Activated CD4-positive, alpha-beta T cell treated with anti-CD3 and anti-CD28 coated beads for 36 hours (primary cell): ENCODE measurements at regions of chr2 and their contacts with region 1.

Region 1: GRCh38 chr2:74119912-74120825 is 27.5 kb downstream of the BOLA3 start:
- DNase-seq: peak; percentile 92
- ATAC-seq: peak; percentile 97
- H3K4me3 Mint-ChIP-seq: peak overlapping the region; percentile 81
- H3K27ac Mint-ChIP-seq: peak overlapping the region; percentile 89
- H3K4me1 Mint-ChIP-seq: peaks cover 7% of the 10 kb centered on the region
- H3K27me3 Mint-ChIP-seq: peaks cover 3% of the 10 kb centered on the region

Region 2: GRCh38 chr2:73779467-73780236 is 340.5 kb before region 1 on chr2 and contains the start of gene DUSP11:
- CTCF ChIA-PET with region 1: interaction called, 3 read pairs
- POLR2A ChIA-PET with region 1: no interaction called
- intact Hi-C with region 1: loop called in 1 of 2 experiments (anchors 1 kb)
- DNase-seq: peak; percentile 98
- ATAC-seq: peak; percentile 100
- H3K4me3 Mint-ChIP-seq: peak within 1 kb of the TSS; percentile 100
- H3K27ac Mint-ChIP-seq: peak within 1 kb of the TSS; percentile 98
- H3K4me1 Mint-ChIP-seq: peaks cover 27% of the 10 kb centered on the region
- H3K27me3 Mint-ChIP-seq: peaks cover 2% of the 10 kb centered on the region
- total RNA-seq, gene DUSP11: 27.6 to 33.5 TPM

Region 3: GRCh38 chr2:74002487-74003391 is 117.4 kb before region 1 on chr2:
- CTCF ChIA-PET with region 1: no interaction called
- POLR2A ChIA-PET with region 1: no interaction called
- intact Hi-C with region 1: loop called in 1 of 2 experiments (anchors 2 kb)
- DNase-seq: peak; percentile 89
- ATAC-seq: peak; percentile 81
- H3K4me3 Mint-ChIP-seq: peak overlapping the region; percentile 77
- H3K27ac Mint-ChIP-seq: peak overlapping the region; percentile 71
- H3K4me1 Mint-ChIP-seq: peaks cover 81% of the 10 kb centered on the region
- H3K27me3 Mint-ChIP-seq: no peaks in the 10 kb centered on the region

Region 4: DNA sequence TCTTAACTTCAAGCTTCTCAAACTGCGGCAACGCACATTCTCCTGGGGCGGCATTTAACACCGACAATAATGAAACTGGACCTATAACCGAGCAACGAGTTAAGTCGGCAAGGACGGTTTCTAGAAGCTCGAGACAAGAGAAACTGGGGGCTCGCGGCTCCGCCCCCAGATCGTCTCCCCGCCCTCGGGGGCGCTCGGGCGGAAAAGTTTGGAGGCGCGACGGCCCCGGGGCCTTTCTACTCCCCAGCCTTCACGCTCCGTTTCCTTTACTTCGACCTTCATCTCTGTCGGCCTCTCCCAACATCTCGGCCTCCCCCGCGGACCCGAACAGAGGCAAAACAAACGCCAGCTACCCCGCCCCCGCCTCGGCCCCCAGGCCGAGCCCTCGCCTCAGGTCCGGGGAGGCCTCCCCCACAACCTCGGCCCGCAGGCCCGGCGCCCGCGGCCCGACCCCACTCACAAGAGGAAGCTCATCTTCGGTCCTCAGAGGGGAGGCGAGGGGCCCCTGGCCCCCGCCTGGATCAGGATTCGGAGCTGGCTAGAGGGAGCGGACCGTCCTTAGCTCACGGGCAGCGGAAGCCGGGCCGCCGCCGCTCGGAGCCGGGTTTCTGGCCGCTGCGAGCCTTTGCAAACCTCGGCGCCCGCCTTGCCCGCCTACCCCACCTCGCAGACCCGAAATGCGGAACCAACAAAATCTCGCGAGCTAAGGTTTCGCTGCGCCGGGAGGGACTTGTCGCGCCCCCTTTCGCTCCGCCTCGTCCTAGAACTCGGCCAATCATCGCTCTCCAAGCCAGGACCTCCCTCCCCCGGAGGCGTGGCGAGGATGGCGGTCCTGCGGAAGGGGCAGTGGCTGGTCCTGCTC is 58.3 kb after region 1 on chr2 and contains the start of gene MOB1A:
- CTCF ChIA-PET with region 1: interaction called, 17 read pairs
- POLR2A ChIA-PET with region 1: interaction called, 4 read pairs
- intact Hi-C with region 1: loop called in 1 of 2 experiments (anchors 1 kb)
- DNase-seq: peak; percentile 99
- ATAC-seq: peak; percentile 95
- H3K4me3 Mint-ChIP-seq: peak within 1 kb of the TSS; percentile 82
- H3K27ac Mint-ChIP-seq: peak within 1 kb of the TSS; percentile 87
- H3K4me1 Mint-ChIP-seq: peaks cover 42% of the 10 kb centered on the region
- H3K27me3 Mint-ChIP-seq: no peaks in the 10 kb centered on the region
- total RNA-seq, gene MOB1A: 96.6 to 149 TPM

Region 5: DNA sequence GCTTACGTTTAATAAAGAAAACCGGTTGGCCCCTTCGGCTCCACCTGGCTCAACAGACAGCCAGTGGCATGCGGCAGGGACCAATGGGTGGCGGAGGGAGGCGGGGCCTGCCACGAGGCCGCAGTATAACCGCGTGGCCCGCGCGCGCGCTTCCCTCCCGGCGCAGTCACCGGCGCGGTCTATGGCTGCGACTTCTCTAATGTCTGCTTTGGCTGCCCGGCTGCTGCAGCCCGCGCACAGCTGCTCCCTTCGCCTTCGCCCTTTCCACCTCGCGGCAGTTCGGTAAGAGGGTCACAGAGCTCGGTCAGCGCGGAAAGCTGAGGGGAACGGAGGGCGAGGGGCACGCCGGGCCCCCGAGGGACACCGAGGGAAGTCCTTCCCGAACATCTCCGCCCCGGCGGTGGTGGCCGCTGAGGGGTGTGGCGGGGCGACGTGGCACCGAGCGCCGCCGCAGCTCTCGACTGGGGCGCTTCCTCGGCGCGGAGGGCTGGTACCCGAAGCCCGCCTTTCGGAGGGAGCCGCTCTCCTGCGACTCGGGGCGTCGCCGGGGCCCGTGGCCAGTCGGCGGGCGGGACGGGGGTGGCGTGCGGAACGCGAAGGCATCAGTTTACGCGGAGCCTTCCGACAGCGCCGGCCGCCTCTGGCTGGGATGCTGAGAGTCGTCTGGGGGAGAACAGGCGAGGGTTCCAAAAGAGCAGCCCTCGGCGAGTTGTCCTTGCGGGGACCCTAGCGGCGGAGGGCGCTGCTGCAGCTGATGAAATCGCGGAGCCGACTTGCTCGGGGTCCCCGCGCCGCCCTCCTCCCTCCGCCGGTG is 78.5 kb after region 1 on chr2 and contains the start of gene MTHFD2:
- CTCF ChIA-PET with region 1: no interaction called
- POLR2A ChIA-PET with region 1: no interaction called
- intact Hi-C with region 1: loop called in 1 of 2 experiments (anchors 1 kb)
- DNase-seq: peak; percentile 96
- ATAC-seq: peak; percentile 90
- H3K4me3 Mint-ChIP-seq: peak within 1 kb of the TSS; percentile 100
- H3K27ac Mint-ChIP-seq: peak within 1 kb of the TSS; percentile 100
- H3K4me1 Mint-ChIP-seq: peaks cover 40% of the 10 kb centered on the region
- H3K27me3 Mint-ChIP-seq: no peaks in the 10 kb centered on the region
- total RNA-seq, gene MTHFD2: 411 to 453 TPM